ENCODE measurements at regions of chr7 and their contacts with region 1.

Region 1: DNA sequence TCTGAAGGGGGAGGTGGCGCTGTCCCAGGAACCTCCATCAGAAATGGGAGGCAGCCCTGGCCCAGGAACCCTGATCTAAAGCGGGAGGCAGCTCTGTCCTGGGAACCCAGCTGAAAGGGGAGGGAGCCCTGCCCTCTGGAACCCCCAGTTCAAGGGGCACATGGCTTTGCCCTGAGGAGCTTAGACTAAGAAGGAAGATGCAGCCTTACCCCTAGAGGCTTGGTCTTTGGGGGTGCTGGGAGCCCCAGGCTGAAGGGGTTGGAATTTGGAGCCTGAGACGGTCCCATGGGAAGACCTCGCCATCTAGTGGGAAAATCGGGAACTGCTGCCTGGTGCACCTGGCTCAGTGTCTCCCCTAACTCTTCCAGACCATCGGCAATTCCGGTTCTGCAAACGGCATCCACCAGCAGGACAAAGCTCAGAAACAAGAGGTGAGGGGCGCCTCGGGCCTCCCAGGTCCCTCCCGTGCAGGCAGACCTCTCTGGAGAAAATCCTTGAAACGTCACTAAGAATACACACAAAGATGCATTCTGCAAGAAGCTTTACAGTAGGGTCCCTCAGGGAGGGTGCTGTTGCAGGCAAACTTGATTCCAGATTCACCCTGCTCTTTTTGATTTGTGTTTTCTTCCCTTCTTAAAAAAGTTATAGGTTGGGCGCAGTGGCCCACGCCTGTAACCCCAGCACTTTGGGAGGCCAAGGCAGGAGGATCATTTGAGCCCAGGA is 52.4 kb upstream of the GTF2IRD1 start:
- DNase-seq: peak; percentile 71
- H3K4me3 Mint-ChIP-seq: no peak overlapping the region
- H3K27ac Mint-ChIP-seq: no peak overlapping the region
- H3K4me1 Mint-ChIP-seq: no peaks in the 10 kb centered on the region
- H3K27me3 Mint-ChIP-seq: no peaks in the 10 kb centered on the region
- CTCF ChIP-seq: peak; percentile 99

Region 2: GRCh38 chr7:73683056-73683964 is 718.0 kb before region 1 on chr7 and contains the starts of genes BUD23 and DNAJC30:
- CTCF ChIA-PET with region 1: no interaction called
- POLR2A ChIA-PET with region 1: no interaction called
- intact Hi-C with region 1: no loop called
- DNase-seq: peak; percentile 97
- H3K4me3 Mint-ChIP-seq: peak within 1 kb of the TSS; percentile 94
- H3K27ac Mint-ChIP-seq: peak within 1 kb of the TSS; percentile 97
- H3K4me1 Mint-ChIP-seq: peaks cover 18% of the 10 kb centered on the region
- H3K27me3 Mint-ChIP-seq: no peaks in the 10 kb centered on the region
- CTCF ChIP-seq: no peak
- total RNA-seq, gene BUD23: 71.5 and 81.9 TPM in 2 replicates
- total RNA-seq, gene DNAJC30: 11.0 and 11.4 TPM in 2 replicates

Region 3: GRCh38 chr7:74068393-74069085 is 332.8 kb before region 1 on chr7:
- CTCF ChIA-PET with region 1: interaction called, 36 read pairs
- POLR2A ChIA-PET with region 1: no interaction called
- intact Hi-C with region 1: loop called (anchors 2 kb)
- DNase-seq: no peak
- H3K4me3 Mint-ChIP-seq: no peak overlapping the region
- H3K27ac Mint-ChIP-seq: no peak overlapping the region
- H3K4me1 Mint-ChIP-seq: no peaks in the 10 kb centered on the region
- H3K27me3 Mint-ChIP-seq: no peaks in the 10 kb centered on the region
- CTCF ChIP-seq: no peak

Region 4: GRCh38 chr7:74206589-74207120 is 194.6 kb before region 1 on chr7:
- CTCF ChIA-PET with region 1: interaction called, 217 read pairs
- POLR2A ChIA-PET with region 1: interaction called, 8 read pairs
- intact Hi-C with region 1: no loop called
- DNase-seq: peak; percentile 80
- H3K4me3 Mint-ChIP-seq: no peak overlapping the region
- H3K27ac Mint-ChIP-seq: no peak overlapping the region
- H3K4me1 Mint-ChIP-seq: peaks cover 10% of the 10 kb centered on the region
- H3K27me3 Mint-ChIP-seq: no peaks in the 10 kb centered on the region
- CTCF ChIP-seq: peak; percentile 97

Region 5: GRCh38 chr7:74281030-74281429 is 120.3 kb before region 1 on chr7:
- CTCF ChIA-PET with region 1: interaction called, 12 read pairs
- POLR2A ChIA-PET with region 1: no interaction called
- intact Hi-C with region 1: no loop called
- DNase-seq: no peak
- H3K4me3 Mint-ChIP-seq: no peak overlapping the region
- H3K27ac Mint-ChIP-seq: no peak overlapping the region
- H3K4me1 Mint-ChIP-seq: peaks cover 10% of the 10 kb centered on the region
- H3K27me3 Mint-ChIP-seq: no peaks in the 10 kb centered on the region
- CTCF ChIP-seq: no peak

Region 6: GRCh38 chr7:74306730-74307469 is 94.4 kb before region 1 on chr7:
- CTCF ChIA-PET with region 1: interaction called, 10 read pairs
- POLR2A ChIA-PET with region 1: no interaction called
- intact Hi-C with region 1: no loop called
- DNase-seq: peak; percentile 83
- H3K4me3 Mint-ChIP-seq: no peak overlapping the region
- H3K27ac Mint-ChIP-seq: no peak overlapping the region
- H3K4me1 Mint-ChIP-seq: peaks cover 12% of the 10 kb centered on the region
- H3K27me3 Mint-ChIP-seq: no peaks in the 10 kb centered on the region
- CTCF ChIP-seq: no peak

Region 7: DNA sequence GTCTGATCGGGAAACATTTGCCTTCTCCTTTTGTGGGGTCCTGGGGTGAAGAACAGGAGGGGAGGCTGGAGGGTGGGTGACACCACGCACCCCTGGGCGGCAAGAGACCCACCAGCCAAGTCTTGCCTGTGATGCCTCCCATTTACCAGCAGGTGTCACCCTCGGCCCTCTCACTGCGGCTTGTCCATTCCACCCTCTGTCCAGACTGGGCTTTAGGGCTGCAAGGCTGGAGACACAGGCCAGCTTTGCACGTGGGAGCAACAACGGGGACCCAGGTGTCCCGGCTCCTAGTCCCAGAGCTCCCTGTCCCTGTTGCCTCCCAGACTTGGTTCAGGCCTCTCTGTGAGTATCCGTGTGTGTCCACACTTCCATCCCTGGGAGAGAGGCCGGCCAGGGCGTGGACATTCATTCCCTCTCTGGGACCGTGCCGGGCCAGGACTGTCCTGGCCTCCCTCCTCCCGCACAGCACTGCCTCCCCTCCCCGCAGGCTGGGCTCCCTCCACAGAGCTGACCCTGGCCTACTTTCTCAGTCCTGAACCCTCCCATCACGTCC is 16.2 kb after region 1 on chr7:
- CTCF ChIA-PET with region 1: interaction called, 25 read pairs
- POLR2A ChIA-PET with region 1: no interaction called
- intact Hi-C with region 1: no loop called
- DNase-seq: peak; percentile 82
- H3K4me3 Mint-ChIP-seq: no peak overlapping the region
- H3K27ac Mint-ChIP-seq: no peak overlapping the region
- H3K4me1 Mint-ChIP-seq: peaks cover 6% of the 10 kb centered on the region
- H3K27me3 Mint-ChIP-seq: no peaks in the 10 kb centered on the region
- CTCF ChIP-seq: peak; percentile 96

Region 8: GRCh38 chr7:74443543-74444247 is 42.4 kb after region 1 on chr7:
- CTCF ChIA-PET with region 1: no interaction called
- POLR2A ChIA-PET with region 1: no interaction called
- intact Hi-C with region 1: no loop called
- DNase-seq: no peak
- H3K4me3 Mint-ChIP-seq: no peak overlapping the region
- H3K27ac Mint-ChIP-seq: no peak overlapping the region
- H3K4me1 Mint-ChIP-seq: no peaks in the 10 kb centered on the region
- H3K27me3 Mint-ChIP-seq: no peaks in the 10 kb centered on the region
- CTCF ChIP-seq: no peak